Tibial artery (tissue), 4 donors: ENCODE measurements at regions of chr2 and their contacts with region 1.

Region 1: GRCh38 chr2:118855451-118856279 is 8.2 kb upstream of the EN1 start:
- DNase-seq: peak; percentile 77 to 83
- H3K4me3 ChIP-seq: peak overlapping the region; percentile 4 to 30
- H3K27ac ChIP-seq: no peak overlapping the region
- H3K4me1 ChIP-seq: peaks cover 0 to 51% (median 31%) of the 10 kb centered on the region in 4 donors
- H3K27me3 ChIP-seq: peaks cover 0 to 98% of the 10 kb centered on the region in 2 donors
- CTCF ChIP-seq: peak; percentile 92 to 97

Region 2: GRCh38 chr2:118046634-118047210 is 808.9 kb before region 1 on chr2:
- intact Hi-C with region 1: loop called (anchors 2 kb)
- DNase-seq: no peak
- H3K4me3 ChIP-seq: no peak overlapping the region
- H3K27ac ChIP-seq: no peak overlapping the region
- H3K4me1 ChIP-seq: no peaks in the 10 kb centered on the region
- H3K27me3 ChIP-seq: peaks cover 0 to 28% of the 10 kb centered on the region in 2 donors
- CTCF ChIP-seq: peak; percentile 58 to 68

Region 3: GRCh38 chr2:118202707-118203303 is 652.9 kb before region 1 on chr2:
- intact Hi-C with region 1: loop called (anchors 10 kb)
- DNase-seq: peak in 1 of 2 donors; percentile 31
- H3K4me3 ChIP-seq: no peak overlapping the region
- H3K27ac ChIP-seq: no peak overlapping the region
- H3K4me1 ChIP-seq: no peaks in the 10 kb centered on the region
- H3K27me3 ChIP-seq: peaks cover 0 to 18% of the 10 kb centered on the region in 2 donors
- CTCF ChIP-seq: peak; percentile 56 to 60

Region 4: GRCh38 chr2:118661179-118661578 is 194.5 kb before region 1 on chr2:
- intact Hi-C with region 1: no loop called
- DNase-seq: no peak
- H3K4me3 ChIP-seq: no peak overlapping the region
- H3K27ac ChIP-seq: no peak overlapping the region
- H3K4me1 ChIP-seq: no peaks in the 10 kb centered on the region
- H3K27me3 ChIP-seq: no peaks in the 10 kb centered on the region
- CTCF ChIP-seq: no peak

Region 5: DNA sequence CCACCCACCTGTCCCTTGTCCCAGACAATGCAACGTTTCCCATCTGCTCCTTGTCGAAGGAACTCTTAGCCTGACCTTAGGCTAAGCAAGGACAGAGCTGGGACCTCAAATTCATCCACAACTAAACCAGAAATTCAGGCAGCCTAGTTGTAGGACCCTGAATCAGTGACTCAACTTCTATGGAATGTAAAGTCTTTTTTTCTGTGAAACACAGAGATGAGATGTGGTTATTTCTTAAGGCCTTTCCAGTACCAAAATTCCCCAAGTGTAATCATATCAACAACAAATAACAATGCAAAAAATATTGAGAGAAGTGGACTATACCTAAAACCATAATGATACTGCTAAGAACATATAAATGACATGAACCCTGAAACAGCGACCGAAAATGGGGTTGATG is 54.9 kb before region 1 on chr2:
- intact Hi-C with region 1: no loop called
- DNase-seq: no peak
- H3K4me3 ChIP-seq: no peak overlapping the region
- H3K27ac ChIP-seq: no peak overlapping the region
- H3K4me1 ChIP-seq: no peaks in the 10 kb centered on the region
- H3K27me3 ChIP-seq: peaks cover 0 to 10% of the 10 kb centered on the region in 2 donors
- CTCF ChIP-seq: no peak